ENCODE measurements at regions of chr7 and their contacts with region 1.

Region 1: DNA sequence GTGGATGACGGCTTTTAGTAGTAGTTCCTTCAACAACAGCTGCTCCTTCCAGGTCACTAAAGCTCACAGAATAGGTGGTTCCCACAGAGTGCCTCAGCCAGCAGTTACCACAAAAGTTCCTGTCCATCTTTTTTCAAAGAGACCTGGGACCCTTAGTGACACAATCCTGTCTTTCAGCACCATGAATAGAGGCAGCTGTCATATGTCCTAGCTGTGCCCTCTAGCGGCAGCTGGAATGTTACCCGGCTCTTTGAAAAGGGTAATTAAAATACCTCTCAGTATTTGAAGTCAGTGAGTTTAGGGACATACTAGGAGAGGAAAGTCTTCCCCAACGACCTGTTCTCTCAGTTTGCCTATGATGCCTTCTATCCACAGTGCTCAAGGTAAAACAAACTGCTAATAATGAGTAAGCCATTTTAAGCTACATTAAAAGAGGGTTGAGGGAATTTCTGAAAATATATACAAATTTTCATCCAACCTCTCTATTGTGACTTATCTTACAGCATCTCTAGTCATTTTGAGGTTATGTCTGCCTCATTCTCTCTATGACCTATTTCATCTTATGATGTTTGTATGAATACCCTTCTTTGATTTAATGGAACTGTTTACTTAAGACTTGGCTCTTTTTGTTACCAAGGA is 290.8 kb downstream of the NXPH1 start:
- DNase-seq: peak; percentile 75
- ATAC-seq: peak; percentile 94
- H3K4me3 Mint-ChIP-seq: no peak overlapping the region
- H3K27ac Mint-ChIP-seq: no peak overlapping the region
- H3K4me1 Mint-ChIP-seq: no peaks in the 10 kb centered on the region
- H3K27me3 Mint-ChIP-seq: no peaks in the 10 kb centered on the region
- CTCF ChIP-seq: peak; percentile 63

Region 2: DNA sequence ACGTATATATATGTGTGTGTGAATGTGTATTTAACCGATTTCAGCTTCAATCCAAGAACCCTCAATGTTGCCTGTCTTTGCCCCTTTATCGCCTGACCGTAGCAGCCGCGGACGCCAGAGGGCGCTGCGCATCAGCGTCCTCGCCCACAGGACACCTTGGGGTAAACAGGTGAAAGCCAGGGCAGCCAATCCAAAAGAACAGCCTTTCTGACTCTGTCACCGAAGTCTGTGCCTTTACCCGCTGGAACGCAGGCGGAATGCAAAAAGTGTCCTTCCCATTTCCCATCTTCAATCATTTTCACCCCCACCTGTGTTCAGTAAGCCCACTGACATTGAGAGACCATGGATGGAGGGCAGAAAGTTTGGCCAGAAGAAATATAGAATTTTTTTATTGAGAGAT is 287.2 kb before region 1 on chr7:
- CTCF ChIA-PET with region 1: interaction called, 15 read pairs
- POLR2A ChIA-PET with region 1: no interaction called
- DNase-seq: peak; percentile 93
- ATAC-seq: peak; percentile 47
- H3K4me3 Mint-ChIP-seq: peak overlapping the region; percentile 76
- H3K27ac Mint-ChIP-seq: no peak overlapping the region
- H3K4me1 Mint-ChIP-seq: peaks cover 62% of the 10 kb centered on the region
- H3K27me3 Mint-ChIP-seq: peaks cover 100% of the 10 kb centered on the region
- CTCF ChIP-seq: peak; percentile 95

Region 3: GRCh38 chr7:8442814-8443313 is 281.3 kb before region 1 on chr7:
- CTCF ChIA-PET with region 1: interaction called, 15 read pairs
- POLR2A ChIA-PET with region 1: no interaction called
- DNase-seq: peak; percentile 94
- ATAC-seq: peak; percentile 74
- H3K4me3 Mint-ChIP-seq: peak overlapping the region; percentile 90
- H3K27ac Mint-ChIP-seq: no peak overlapping the region
- H3K4me1 Mint-ChIP-seq: peaks cover 39% of the 10 kb centered on the region
- H3K27me3 Mint-ChIP-seq: peaks cover 76% of the 10 kb centered on the region
- CTCF ChIP-seq: no peak

Region 4: GRCh38 chr7:8710124-8710523 is 14.1 kb before region 1 on chr7:
- CTCF ChIA-PET with region 1: no interaction called
- POLR2A ChIA-PET with region 1: no interaction called
- DNase-seq: no peak
- ATAC-seq: no peak
- H3K4me3 Mint-ChIP-seq: no peak overlapping the region
- H3K27ac Mint-ChIP-seq: no peak overlapping the region
- H3K4me1 Mint-ChIP-seq: peaks cover 6% of the 10 kb centered on the region
- H3K27me3 Mint-ChIP-seq: no peaks in the 10 kb centered on the region
- CTCF ChIP-seq: no peak

Measured in WTC11 (cell line).